ENCODE measurements at regions of chr16 and their contacts with region 1.

Region 1: GRCh38 chr16:610513-611334 is 20.1 kb upstream of the WFIKKN1 start:
- DNase-seq: peak; percentile 82
- ATAC-seq: peak; percentile 57
- H3K4me3 Mint-ChIP-seq: no peak overlapping the region
- H3K27ac Mint-ChIP-seq: peak overlapping the region; percentile 32
- H3K4me1 Mint-ChIP-seq: peaks cover 17% of the 10 kb centered on the region
- H3K27me3 Mint-ChIP-seq: no peaks in the 10 kb centered on the region

Region 2: GRCh38 chr16:234468-235305 is 376.0 kb before region 1 on chr16 and contains the start of gene FAM234A:
- CTCF ChIA-PET with region 1: no interaction called
- POLR2A ChIA-PET with region 1: no interaction called
- intact Hi-C with region 1: no loop called
- DNase-seq: peak; percentile 98
- ATAC-seq: peak; percentile 91
- H3K4me3 Mint-ChIP-seq: peak within 1 kb of the TSS; percentile 90
- H3K27ac Mint-ChIP-seq: peak within 1 kb of the TSS; percentile 96
- H3K4me1 Mint-ChIP-seq: peaks cover 17% of the 10 kb centered on the region
- H3K27me3 Mint-ChIP-seq: no peaks in the 10 kb centered on the region
- total RNA-seq, gene FAM234A: 11.3 to 15.2 TPM

Region 3: DNA sequence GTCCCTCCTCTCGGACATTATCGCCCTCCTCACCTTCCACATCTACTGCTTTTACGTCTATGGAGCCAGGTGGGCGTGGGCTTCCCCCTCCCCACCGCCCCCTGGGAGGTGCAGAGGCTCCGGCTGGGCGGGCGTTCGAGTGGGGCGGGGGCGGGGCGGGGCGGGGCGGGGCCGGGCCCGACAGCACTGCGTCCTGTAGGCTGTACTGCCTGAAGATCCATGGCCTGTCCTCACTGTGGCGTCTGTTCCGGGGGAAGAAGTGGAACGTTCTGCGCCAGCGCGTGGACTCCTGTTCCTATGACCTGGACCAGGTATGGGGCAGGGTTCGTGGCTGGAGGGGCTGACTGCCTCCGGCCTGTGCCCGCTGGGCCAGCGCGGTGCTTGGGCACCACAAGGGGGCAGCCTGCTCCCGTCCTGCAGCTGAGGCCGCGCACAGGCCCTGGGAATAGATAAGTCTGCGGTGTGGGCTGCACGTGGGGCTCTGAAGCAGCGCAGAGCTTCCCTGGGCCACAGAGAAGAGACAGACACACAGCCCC is 31.8 kb before region 1 on chr16:
- CTCF ChIA-PET with region 1: interaction called, 3 read pairs
- POLR2A ChIA-PET with region 1: no interaction called
- intact Hi-C with region 1: loop called (anchors 1 to 2 kb)
- DNase-seq: peak; percentile 85
- ATAC-seq: peak; percentile 94
- H3K4me3 Mint-ChIP-seq: no peak overlapping the region
- H3K27ac Mint-ChIP-seq: no peak overlapping the region
- H3K4me1 Mint-ChIP-seq: no peaks in the 10 kb centered on the region
- H3K27me3 Mint-ChIP-seq: no peaks in the 10 kb centered on the region

Region 4: GRCh38 chr16:886084-886543 is 275.4 kb after region 1 on chr16:
- CTCF ChIA-PET with region 1: no interaction called
- POLR2A ChIA-PET with region 1: no interaction called
- intact Hi-C with region 1: no loop called
- DNase-seq: peak; percentile 1
- ATAC-seq: no peak
- H3K4me3 Mint-ChIP-seq: no peak overlapping the region
- H3K27ac Mint-ChIP-seq: no peak overlapping the region
- H3K4me1 Mint-ChIP-seq: no peaks in the 10 kb centered on the region
- H3K27me3 Mint-ChIP-seq: no peaks in the 10 kb centered on the region